Activated naive CD4-positive, alpha-beta T cell treated with anti-CD3 and anti-CD28 coated beads for 36 hours (primary cell): ENCODE measurements at regions of chr21 and their contacts with region 1.

Region 1: GRCh38 chr21:35833991-35834390 is 226.3 kb downstream of the SETD4 start:
- DNase-seq: no peak
- H3K4me3 Mint-ChIP-seq: no peak overlapping the region
- H3K27ac Mint-ChIP-seq: no peak overlapping the region
- H3K4me1 Mint-ChIP-seq: peaks cover 3% of the 10 kb centered on the region
- H3K27me3 Mint-ChIP-seq: peaks cover 12% of the 10 kb centered on the region

Region 2: GRCh38 chr21:35658242-35658641 is 175.7 kb before region 1 on chr21:
- CTCF ChIA-PET with region 1: no interaction called
- intact Hi-C with region 1: loop called (anchors 10 kb)
- DNase-seq: no peak
- H3K4me3 Mint-ChIP-seq: no peak overlapping the region
- H3K27ac Mint-ChIP-seq: no peak overlapping the region
- H3K4me1 Mint-ChIP-seq: peaks cover 12% of the 10 kb centered on the region
- H3K27me3 Mint-ChIP-seq: no peaks in the 10 kb centered on the region

Region 3: GRCh38 chr21:35868005-35868868 is 34.2 kb after region 1 on chr21:
- CTCF ChIA-PET with region 1: no interaction called
- intact Hi-C with region 1: no loop called
- DNase-seq: no peak
- H3K4me3 Mint-ChIP-seq: no peak overlapping the region
- H3K27ac Mint-ChIP-seq: no peak overlapping the region
- H3K4me1 Mint-ChIP-seq: no peaks in the 10 kb centered on the region
- H3K27me3 Mint-ChIP-seq: peaks cover 4% of the 10 kb centered on the region